SK-N-SH (cell line): ENCODE measurements at regions of chr7 and their contacts with region 1.

Region 1: GRCh38 chr7:38335492-38336147 is 62.2 kb upstream of the TARP start:
- DNase-seq: peak; percentile 79
- H3K4me3 ChIP-seq: peak overlapping the region in 1 of 2 experiments; percentile 25; a peak in 1 of 4 replicates
- H3K27ac ChIP-seq: no peak overlapping the region
- H3K4me1 ChIP-seq: peaks cover 0 to 2% of the 10 kb centered on the region in 2 experiments; a peak in 1 of 4 replicates
- H3K27me3 ChIP-seq: no peaks in the 10 kb centered on the region
- CTCF ChIP-seq: peak; percentile 94
- EP300 ChIP-seq: no peak
- RAD21 ChIP-seq: peak; percentile 72

Region 2: GRCh38 chr7:37901236-37901827 is 434.3 kb before region 1 on chr7:
- CTCF ChIA-PET with region 1: interaction called, 19 read pairs
- POLR2A ChIA-PET with region 1: no interaction called
- DNase-seq: peak; percentile 47
- H3K4me3 ChIP-seq: peak overlapping the region in 1 of 2 experiments; percentile 4; a peak in 1 of 4 replicates
- H3K27ac ChIP-seq: no peak overlapping the region
- H3K4me1 ChIP-seq: peaks cover 0 to 8% of the 10 kb centered on the region in 2 experiments; a peak in 3 of 4 replicates
- H3K27me3 ChIP-seq: no peaks in the 10 kb centered on the region
- CTCF ChIP-seq: peak; percentile 83
- EP300 ChIP-seq: no peak
- RAD21 ChIP-seq: peak; percentile 85

Region 3: GRCh38 chr7:38291117-38291647 is 44.4 kb before region 1 on chr7:
- CTCF ChIA-PET with region 1: no interaction called
- POLR2A ChIA-PET with region 1: no interaction called
- DNase-seq: no peak
- H3K4me3 ChIP-seq: no peak overlapping the region
- H3K27ac ChIP-seq: no peak overlapping the region
- H3K4me1 ChIP-seq: no peaks in the 10 kb centered on the region; a peak in 1 of 4 replicates
- H3K27me3 ChIP-seq: peaks cover 12% of the 10 kb centered on the region; the same call in 1 of the 2 replicates
- CTCF ChIP-seq: no peak
- EP300 ChIP-seq: no peak
- RAD21 ChIP-seq: no peak

Region 4: GRCh38 chr7:38351601-38352000 is 16.0 kb after region 1 on chr7:
- CTCF ChIA-PET with region 1: interaction called, 13 read pairs
- POLR2A ChIA-PET with region 1: no interaction called
- DNase-seq: no peak
- H3K4me3 ChIP-seq: no peak overlapping the region
- H3K27ac ChIP-seq: no peak overlapping the region
- H3K4me1 ChIP-seq: no peaks in the 10 kb centered on the region
- H3K27me3 ChIP-seq: no peaks in the 10 kb centered on the region
- CTCF ChIP-seq: no peak
- EP300 ChIP-seq: no peak
- RAD21 ChIP-seq: no peak